Heart right ventricle (tissue), 16 donors: ENCODE measurements at regions of chr18 and their contacts with region 1.

Region 1: DNA sequence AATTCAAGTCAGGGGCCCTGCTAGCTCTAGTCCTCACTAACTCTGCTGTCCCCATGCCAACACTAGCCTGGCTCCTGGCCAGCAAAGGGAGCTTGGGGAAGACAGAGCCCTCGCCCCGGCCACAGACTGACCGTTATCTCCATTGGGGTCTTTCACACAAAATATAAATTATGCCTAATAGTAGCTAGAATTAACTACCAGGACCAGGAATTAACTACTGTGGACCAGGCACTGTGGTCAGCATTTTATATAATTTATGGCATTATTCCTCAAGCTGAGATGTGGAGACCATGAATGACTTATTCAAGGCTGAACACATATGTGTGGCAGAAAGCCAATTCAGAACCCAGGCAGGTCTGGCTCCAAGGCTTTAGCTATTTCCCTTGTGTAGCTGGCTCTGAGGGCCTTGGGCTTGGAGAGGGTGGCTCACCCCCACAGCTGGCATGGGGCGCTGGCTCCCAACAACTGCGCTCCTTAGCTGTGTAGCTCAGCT is 49.2 kb downstream of the CELF4 start:
- DNase-seq: no peak
- ATAC-seq: no peak
- H3K4me3 ChIP-seq: no peak overlapping the region
- H3K27ac ChIP-seq: no peak overlapping the region
- H3K4me1 ChIP-seq: no peaks in the 10 kb centered on the region
- H3K27me3 ChIP-seq: peaks cover 0 to 49% (median 20%) of the 10 kb centered on the region in 7 donors
- CTCF ChIP-seq: no peak

Region 2: GRCh38 chr18:35592298-35592697 is 1924.1 kb before region 1 on chr18:
- intact Hi-C with region 1: loop called in 1 of 10 experiments (anchors 5 kb)
- DNase-seq: no peak
- ATAC-seq: peak in 2 of 8 donors; percentile 38 to 64
- H3K4me3 ChIP-seq: no peak overlapping the region
- H3K27ac ChIP-seq: no peak overlapping the region
- H3K4me1 ChIP-seq: peaks cover 0 to 32% (median 17%) of the 10 kb centered on the region in 9 donors
- H3K27me3 ChIP-seq: no peaks in the 10 kb centered on the region
- CTCF ChIP-seq: no peak

Region 3: DNA sequence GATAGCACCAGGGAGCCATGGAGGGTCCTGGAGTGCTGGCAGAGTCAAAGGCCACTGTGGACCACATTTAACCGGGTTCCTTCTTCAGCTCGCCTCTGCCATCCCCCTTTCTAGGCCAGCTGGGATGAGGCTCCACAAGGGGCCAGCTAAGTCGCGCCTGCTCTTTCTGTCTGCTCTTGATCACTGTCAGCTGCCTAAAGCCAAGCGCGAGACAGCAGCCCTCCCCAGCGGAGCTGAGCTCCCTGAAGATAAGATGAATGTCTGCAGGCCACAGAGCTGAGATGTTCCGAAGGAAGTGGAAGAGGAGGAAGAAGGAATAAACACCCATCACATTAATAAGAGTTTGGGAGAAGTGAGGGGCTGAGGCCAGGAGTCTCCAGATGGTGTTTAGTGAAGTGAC is 50.4 kb before region 1 on chr18:
- intact Hi-C with region 1: no loop called
- DNase-seq: no peak
- ATAC-seq: peak in 3 of 8 donors; percentile 26 to 39 (median 38)
- H3K4me3 ChIP-seq: no peak overlapping the region
- H3K27ac ChIP-seq: no peak overlapping the region
- H3K4me1 ChIP-seq: peaks cover 0 to 4% (median 0%) of the 10 kb centered on the region in 9 donors
- H3K27me3 ChIP-seq: peaks cover 0 to 22% (median 6%) of the 10 kb centered on the region in 7 donors
- CTCF ChIP-seq: no peak

Region 4: GRCh38 chr18:37553633-37554395 is 37.4 kb after region 1 on chr18:
- intact Hi-C with region 1: no loop called
- DNase-seq: no peak
- ATAC-seq: peak in 1 of 8 donors; percentile 54
- H3K4me3 ChIP-seq: no peak overlapping the region
- H3K27ac ChIP-seq: no peak overlapping the region
- H3K4me1 ChIP-seq: no peaks in the 10 kb centered on the region
- H3K27me3 ChIP-seq: peaks cover 0 to 71% (median 39%) of the 10 kb centered on the region in 7 donors
- CTCF ChIP-seq: peak in 5 of 9 donors; percentile 8 to 24 (median 14)